Dorsolateral prefrontal cortex (tissue), 120 donors: ENCODE measurements at regions of chr17 and their contacts with region 1.

Region 1: DNA sequence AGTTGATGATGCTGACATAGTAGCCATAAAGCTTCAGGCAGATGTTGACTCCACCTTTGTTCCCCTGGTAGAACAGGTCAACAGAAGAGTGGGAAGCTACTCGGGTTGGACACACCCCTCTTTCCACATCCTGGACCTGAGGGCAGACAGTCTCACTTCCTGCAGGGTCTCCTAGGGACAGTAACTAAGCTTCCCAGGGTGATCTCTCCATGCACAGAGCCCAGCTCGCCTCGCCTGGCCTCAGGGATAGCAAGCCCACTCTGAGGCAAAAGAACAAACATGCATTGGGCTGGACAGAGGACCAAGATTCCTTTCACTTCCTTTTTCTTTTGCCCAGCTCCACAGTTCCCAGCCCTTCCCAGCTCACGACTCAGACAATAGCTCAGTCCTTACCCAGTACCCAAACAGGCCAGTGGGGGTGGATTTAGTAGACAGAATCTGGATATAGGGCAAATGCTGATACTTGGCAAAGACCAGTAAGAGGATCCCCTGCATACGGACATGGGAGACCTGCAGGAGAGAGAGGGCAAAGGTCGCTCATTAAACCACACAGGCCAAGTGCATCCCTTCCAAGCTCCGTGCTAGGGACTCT is 7.0 kb downstream of the INPP5K start:
- DNase-seq: no peak
- H3K4me3 ChIP-seq: no peak overlapping the region
- H3K27ac ChIP-seq: no peak overlapping the region
- H3K27me3 ChIP-seq: no peaks in the 10 kb centered on the region
- CTCF ChIP-seq: no peak

Region 2: DNA sequence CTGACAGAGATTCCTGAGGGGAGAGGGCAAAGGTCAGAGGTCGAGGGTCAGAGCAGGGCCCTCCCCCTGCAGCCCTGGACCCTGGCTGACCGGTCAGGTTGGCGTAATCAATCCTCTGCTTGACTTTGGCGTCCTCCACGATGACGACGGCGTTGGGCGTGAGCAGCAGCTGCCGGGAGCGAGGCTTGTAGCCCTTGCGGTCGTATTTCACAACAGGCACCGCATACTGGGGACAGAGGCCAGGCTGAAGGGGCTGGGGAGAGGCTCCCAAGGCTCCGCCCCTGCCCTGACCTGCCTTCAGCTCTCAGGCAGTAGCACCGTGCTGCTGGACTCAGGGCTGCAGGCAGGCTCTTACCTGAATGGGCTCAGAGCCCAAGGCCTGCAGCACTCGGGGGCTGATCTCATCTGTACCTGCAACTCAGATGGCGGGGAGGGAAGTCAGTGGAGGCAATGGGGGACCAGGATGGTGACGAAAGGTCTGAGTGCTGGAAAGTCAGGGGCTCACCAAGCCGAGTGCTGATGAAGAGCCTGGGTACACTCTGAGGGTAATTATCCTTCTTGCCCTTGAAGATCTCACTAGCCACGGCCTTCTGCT is 41.4 kb before region 1 on chr17:
- intact Hi-C with region 1: loop called in 1 of 2 experiments (anchors 5 kb)
- DNase-seq: no peak
- H3K4me3 ChIP-seq: no peak overlapping the region
- H3K27ac ChIP-seq: no peak overlapping the region
- H3K27me3 ChIP-seq: no peaks in the 10 kb centered on the region
- CTCF ChIP-seq: no peak

Region 3: DNA sequence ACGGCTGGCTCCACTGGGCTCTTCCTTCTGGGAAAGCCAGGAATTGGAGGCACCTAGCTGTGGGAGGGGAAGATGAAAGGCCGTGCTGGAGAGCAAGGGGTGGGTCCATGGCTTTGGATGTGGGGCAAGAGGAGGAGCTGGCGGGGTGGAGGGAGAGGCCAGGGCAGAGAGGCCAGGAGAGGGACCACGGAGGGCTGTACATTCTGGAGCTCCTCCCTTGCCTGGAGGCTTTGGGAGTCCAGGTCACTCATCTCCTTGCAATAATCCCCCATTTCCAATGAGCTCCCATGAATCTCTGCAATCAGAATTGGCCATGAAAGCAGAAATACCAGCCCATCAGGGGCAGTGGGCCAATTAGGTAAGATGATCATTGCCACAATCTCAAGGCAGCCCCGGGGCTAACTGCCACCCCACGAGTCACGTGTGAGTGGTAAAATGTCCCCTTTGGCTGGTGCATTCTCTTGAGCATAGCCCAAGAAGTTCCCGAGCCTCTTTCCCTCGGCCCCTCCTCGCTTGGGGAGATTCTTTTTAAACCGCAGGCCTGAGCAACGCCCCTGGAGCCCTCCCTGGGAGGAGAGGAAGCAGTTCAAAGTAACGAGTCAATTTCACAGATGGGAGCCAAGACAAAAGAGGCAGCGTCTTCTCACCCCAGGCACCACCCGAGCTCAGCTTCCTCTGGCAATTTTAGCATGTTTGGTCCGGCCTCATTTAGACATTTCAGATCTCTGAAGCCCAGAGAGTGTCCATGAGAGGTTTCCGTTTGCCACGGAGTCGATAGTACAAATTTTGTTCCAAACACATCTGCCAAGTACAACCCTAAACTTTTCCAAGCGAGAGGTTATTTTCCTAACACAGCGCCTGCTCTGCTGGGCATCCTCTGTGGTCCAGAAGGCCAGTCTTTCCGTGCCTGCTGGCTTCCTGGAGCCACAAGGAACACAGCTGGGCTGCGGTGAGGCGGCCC is 502.3 kb after region 1 on chr17:
- intact Hi-C with region 1: no loop called
- DNase-seq: no peak
- H3K4me3 ChIP-seq: peak overlapping the region in 18 of 59 donors; percentile 3 to 34 (median 20)
- H3K27ac ChIP-seq: peak overlapping the region in 47 of 59 donors; percentile 1 to 80 (median 54)
- H3K27me3 ChIP-seq: no peaks in the 10 kb centered on the region
- CTCF ChIP-seq: no peak